ENCODE measurements at regions of chr2 and their contacts with region 1.

Region 1: DNA sequence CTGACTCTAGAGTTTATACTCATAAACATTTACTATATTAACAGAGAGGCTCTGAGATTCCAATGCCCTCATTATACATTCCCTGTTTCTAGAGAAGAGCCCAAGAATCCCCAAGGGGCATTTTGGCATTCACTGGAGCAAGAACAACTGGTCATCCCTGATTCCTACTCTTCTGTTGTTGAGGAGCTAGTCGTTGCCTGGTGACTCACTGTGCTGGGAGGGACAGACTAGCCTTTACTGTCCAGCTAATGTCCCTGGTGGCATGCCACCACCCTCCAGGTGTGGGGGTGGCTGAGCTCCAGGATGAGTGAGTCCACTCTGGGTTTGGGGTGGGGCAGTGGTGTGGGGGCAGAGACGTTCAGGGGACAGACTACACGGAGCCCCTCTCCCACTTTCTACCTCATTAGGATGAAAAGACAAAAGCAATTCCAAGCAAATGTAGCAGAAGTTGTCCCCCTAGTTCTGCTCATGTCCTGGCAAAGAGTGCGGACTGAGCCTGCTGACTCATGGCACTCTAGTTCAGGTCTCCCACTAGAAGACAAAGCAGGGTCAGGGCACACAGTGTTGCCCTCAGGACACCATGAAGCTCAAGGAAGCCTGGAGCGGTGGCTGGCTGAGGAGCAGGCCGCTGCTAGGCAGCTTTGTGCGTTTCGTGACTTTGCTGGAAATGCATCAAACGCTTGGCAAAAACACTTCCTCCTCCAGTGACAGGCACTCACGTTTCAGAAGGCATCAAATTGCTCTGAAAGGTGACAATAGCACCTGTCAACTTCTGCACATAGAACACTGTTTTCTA is 49.4 kb downstream of the RHOB start:
- DNase-seq: peak; percentile 92 to 99
- H3K4me3 ChIP-seq: peak overlapping the region; percentile 33; the same call in 1 of the 2 replicates
- H3K27ac ChIP-seq: peak overlapping the region; percentile 84
- H3K4me1 ChIP-seq: peaks cover 66% of the 10 kb centered on the region
- H3K27me3 ChIP-seq: no peaks in the 10 kb centered on the region
- CTCF ChIP-seq: no peak

Region 2: GRCh38 chr2:20225294-20226151 is 270.8 kb before region 1 on chr2:
- CTCF ChIA-PET with region 1: no interaction called
- POLR2A ChIA-PET with region 1: no interaction called
- intact Hi-C with region 1: no loop called
- DNase-seq: peak; percentile 67 to 88
- H3K4me3 ChIP-seq: peak overlapping the region; percentile 93
- H3K27ac ChIP-seq: peak overlapping the region; percentile 61
- H3K4me1 ChIP-seq: peaks cover 39% of the 10 kb centered on the region
- H3K27me3 ChIP-seq: no peaks in the 10 kb centered on the region
- CTCF ChIP-seq: peak; percentile 75

Region 3: DNA sequence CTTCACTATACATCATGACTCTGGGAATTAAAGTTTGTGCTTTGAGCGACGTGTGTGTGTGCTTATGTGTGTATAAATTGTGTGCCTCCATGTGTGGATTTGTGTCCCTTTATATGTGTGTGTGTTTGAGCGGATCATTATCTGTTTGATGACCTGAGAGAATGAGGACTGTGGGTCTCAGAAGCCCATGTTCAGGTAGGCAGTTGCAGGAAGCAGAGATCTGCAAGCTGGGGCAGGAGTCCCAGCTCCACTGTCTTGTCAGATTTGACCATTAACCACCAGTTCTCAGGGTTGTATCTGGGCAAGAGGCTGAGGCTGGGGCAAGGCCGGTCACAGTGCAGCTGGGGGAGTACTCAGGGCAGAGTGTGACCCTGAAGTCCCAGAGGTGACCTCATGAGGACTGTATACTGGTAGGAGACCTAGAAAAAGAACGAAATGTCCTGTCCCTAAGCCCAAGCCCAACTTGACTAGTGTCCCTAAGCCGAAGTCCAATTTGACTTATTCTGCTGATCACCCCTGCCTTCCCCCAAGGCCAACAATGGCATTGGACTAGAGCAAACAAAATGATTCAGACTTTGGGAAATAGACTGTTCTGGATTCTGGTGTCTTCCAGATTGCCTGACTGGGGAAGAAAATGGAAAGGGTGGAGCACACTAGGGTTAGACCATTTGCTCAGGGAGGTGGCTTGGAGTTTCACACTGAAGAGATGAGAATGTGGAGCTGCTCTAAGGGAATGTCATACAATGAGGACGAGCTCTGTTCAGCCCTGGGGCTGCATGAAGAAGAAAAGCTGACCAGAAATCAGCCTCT is 21.3 kb before region 1 on chr2:
- CTCF ChIA-PET with region 1: no interaction called
- POLR2A ChIA-PET with region 1: interaction called, 4 read pairs
- intact Hi-C with region 1: loop called (anchors 1 kb)
- DNase-seq: peak in 1 of 2 experiments; percentile 34
- H3K4me3 ChIP-seq: no peak overlapping the region
- H3K27ac ChIP-seq: peak overlapping the region; percentile 56
- H3K4me1 ChIP-seq: peaks cover 41% of the 10 kb centered on the region
- H3K27me3 ChIP-seq: no peaks in the 10 kb centered on the region
- CTCF ChIP-seq: no peak

Region 4: DNA sequence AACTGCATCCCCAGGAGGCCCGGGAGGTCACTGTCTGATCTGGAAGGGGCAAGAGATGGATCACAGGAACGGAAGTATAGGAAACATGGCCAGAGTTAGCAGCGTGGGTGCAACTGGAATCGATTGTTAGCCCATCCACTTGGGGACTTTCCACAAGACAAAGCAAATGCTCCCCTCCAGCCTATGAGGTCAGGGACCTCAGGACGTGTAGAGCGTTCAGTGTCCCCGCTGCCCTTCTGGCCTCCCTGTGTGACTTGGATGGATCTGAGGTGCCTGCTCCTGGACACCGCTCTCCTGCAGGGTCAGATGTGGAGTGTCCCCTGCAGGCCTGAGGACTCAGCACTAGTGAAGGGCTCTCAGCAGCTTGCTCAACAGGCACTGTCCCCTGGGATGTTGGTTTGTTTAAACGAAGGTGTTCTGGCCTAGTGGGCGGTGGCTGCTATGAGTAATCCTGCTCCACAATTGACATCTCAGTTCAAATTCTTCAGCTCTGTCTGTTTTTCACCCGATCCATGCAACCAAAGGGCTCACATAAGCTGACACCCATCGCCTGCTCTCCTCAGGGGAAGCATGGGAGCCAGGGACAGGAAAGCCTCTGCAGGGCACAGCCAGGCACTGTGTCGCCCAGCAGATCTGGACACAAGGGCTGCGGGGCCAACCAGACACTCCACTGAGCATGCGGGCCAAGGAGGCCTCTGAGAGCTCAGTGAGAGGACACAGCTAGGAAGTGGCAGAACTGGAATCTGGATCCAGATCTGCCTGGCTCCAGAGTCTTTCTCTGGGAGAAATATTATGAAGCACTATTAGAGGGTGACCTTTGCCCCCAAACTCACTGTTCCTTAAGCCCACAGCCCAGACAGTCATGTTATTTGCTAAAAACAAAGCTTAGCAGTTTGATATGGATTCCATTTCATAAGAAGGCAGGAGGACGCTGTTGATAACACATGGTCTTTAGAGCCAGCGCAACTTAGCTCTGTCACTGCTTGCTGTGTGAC is 29.1 kb after region 1 on chr2:
- CTCF ChIA-PET with region 1: no interaction called
- POLR2A ChIA-PET with region 1: no interaction called
- intact Hi-C with region 1: loop called (anchors 1 kb)
- DNase-seq: peak; percentile 68 to 94
- H3K4me3 ChIP-seq: no peak overlapping the region
- H3K27ac ChIP-seq: peak overlapping the region; percentile 70
- H3K4me1 ChIP-seq: peaks cover 41% of the 10 kb centered on the region
- H3K27me3 ChIP-seq: no peaks in the 10 kb centered on the region
- CTCF ChIP-seq: no peak; the same call in 1 of the 2 replicates

Region 5: GRCh38 chr2:20584637-20585321 is 88.5 kb after region 1 on chr2:
- CTCF ChIA-PET with region 1: no interaction called
- POLR2A ChIA-PET with region 1: no interaction called
- intact Hi-C with region 1: loop called (anchors 1 kb)
- DNase-seq: peak in 1 of 2 experiments; percentile 95
- H3K4me3 ChIP-seq: no peak overlapping the region
- H3K27ac ChIP-seq: peak overlapping the region; percentile 65
- H3K4me1 ChIP-seq: peaks cover 47% of the 10 kb centered on the region
- H3K27me3 ChIP-seq: no peaks in the 10 kb centered on the region
- CTCF ChIP-seq: no peak

Region 6: DNA sequence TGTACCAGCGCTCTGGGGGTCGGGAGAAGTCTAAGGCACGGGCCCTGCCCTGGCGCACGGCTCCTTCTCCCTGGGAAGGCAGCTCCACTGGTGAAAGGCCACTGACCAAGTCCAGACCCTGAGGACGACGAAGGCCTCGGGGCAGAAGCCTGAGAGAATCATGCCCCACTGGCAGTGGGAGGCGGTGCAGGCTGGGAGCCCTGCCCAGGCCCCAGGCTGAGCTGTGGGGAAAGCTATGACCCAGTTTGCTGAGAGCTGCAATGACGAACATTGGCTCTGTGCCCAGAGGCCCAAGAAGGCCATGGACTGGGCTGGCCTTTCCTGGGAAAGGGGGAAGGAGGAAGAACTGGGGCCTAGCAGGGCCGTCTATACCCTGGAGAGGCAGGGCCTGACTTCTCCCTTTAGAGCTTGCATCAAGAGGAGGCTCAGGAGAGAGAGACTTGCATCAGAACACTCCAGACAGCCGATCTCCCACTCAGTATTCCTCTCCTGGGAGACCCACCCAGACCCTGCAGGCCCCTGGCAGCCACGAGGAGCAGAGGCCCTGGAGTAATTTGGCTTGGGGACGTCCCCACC is 121.7 kb after region 1 on chr2:
- CTCF ChIA-PET with region 1: no interaction called
- POLR2A ChIA-PET with region 1: no interaction called
- intact Hi-C with region 1: loop called (anchors 5 kb)
- DNase-seq: peak; percentile 92 to 95
- H3K4me3 ChIP-seq: no peak overlapping the region
- H3K27ac ChIP-seq: peak overlapping the region; percentile 72
- H3K4me1 ChIP-seq: peaks cover 60% of the 10 kb centered on the region
- H3K27me3 ChIP-seq: no peaks in the 10 kb centered on the region
- CTCF ChIP-seq: peak; percentile 47; the same call in 1 of the 2 replicates

Region 7: GRCh38 chr2:21118302-21118920 is 622.1 kb after region 1 on chr2:
- CTCF ChIA-PET with region 1: no interaction called
- POLR2A ChIA-PET with region 1: no interaction called
- intact Hi-C with region 1: no loop called
- DNase-seq: peak in 1 of 2 experiments; percentile 15
- H3K4me3 ChIP-seq: no peak overlapping the region
- H3K27ac ChIP-seq: no peak overlapping the region
- H3K4me1 ChIP-seq: no peaks in the 10 kb centered on the region
- H3K27me3 ChIP-seq: no peaks in the 10 kb centered on the region
- CTCF ChIP-seq: peak; percentile 61